Left colon (tissue), 2 donors: ENCODE measurements at regions of chr10 and their contacts with region 1.

Region 1: GRCh38 chr10:43105102-43105785 is 28.4 kb downstream of the RET start:
- DNase-seq: peak; percentile 68 to 79
- ATAC-seq: peak; percentile 95

Region 2: GRCh38 chr10:42753126-42753506 is 352.1 kb before region 1 on chr10:
- intact Hi-C with region 1: loop called in 1 of 2 experiments (anchors 10 kb)
- DNase-seq: peak; percentile 67 to 87
- ATAC-seq: peak; percentile 94

Region 3: GRCh38 chr10:42866115-42866995 is 238.9 kb before region 1 on chr10:
- intact Hi-C with region 1: loop called (anchors 5 to 10 kb)
- DNase-seq: peak; percentile 59 to 77
- ATAC-seq: peak; percentile 98

Region 4: GRCh38 chr10:42903325-42903724 is 201.9 kb before region 1 on chr10:
- intact Hi-C with region 1: no loop called
- DNase-seq: no peak
- ATAC-seq: no peak